Activated T-helper 2 cell treated with anti-CD3 and anti-CD28 coated beads, Interferon-gamma antibody, Interleukin-2, Interleukin-4, amounts not matched to agents 10 μg/mL and 5 μg/mL and 100 μg/mL, durations not matched to agents 14 hours and 24 hours and 36 hours (primary cell): ENCODE measurements at regions of chr21 and their contacts with region 1.

Region 1: DNA sequence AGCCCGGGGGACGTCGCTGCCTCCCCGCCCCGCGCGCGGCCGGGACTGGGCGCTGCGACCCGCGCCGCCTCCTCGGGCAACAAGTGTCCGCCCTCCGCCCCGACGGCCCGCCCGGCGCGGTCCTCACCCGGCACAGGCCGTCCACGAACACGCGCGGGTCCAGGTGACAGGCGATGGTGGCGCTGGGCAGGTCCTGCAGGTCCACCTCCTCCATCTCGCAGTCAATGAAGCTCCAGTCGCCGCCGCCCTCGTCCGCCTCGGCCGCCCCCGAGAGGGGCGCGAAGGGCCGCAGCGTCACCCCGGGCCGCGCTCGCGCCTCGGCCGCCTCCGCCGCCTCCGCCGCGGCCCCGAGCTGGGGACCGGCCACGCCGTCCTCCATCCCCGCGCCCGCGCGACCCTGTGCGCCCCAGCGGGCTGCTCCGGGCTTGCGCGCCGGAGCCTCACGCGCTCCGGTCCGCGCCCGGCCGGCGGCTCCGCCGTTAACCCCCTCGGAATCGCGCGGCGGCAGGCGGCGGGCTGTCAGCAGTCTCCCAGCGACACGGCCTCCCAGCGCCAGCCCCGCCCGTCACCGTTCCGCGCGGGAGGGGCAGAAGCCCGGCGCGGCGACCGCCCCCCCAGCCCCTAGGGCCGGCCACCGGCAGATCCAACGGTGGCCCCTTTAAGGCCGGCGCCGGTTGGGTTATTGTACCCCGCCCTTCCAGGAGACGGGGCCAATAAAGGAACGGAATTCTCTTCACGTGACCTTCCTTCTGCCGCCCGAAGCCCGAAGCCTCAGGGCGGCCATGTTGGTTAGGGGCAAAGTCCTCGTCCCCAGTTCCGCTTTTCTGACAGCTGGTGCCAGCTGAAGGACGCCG is at the start of gene RCAN1:
- DNase-seq: peak; percentile 85
- H3K4me3 Mint-ChIP-seq: peak within 1 kb of the TSS; percentile 85
- H3K27ac Mint-ChIP-seq: peak within 1 kb of the TSS; percentile 13
- H3K4me1 Mint-ChIP-seq: peaks cover 17% of the 10 kb centered on the region
- H3K27me3 Mint-ChIP-seq: peaks cover 19% of the 10 kb centered on the region
- total RNA-seq, gene RCAN1: 21.1 and 21.8 TPM in 2 replicates

Region 2: GRCh38 chr21:33915368-33916199 is 699.3 kb before region 1 on chr21 and contains the start of gene ATP5PO:
- intact Hi-C with region 1: loop called (anchors 2 kb)
- DNase-seq: peak; percentile 97
- H3K4me3 Mint-ChIP-seq: peak within 1 kb of the TSS; percentile 99
- H3K27ac Mint-ChIP-seq: peak within 1 kb of the TSS; percentile 98
- H3K4me1 Mint-ChIP-seq: peaks cover 30% of the 10 kb centered on the region
- H3K27me3 Mint-ChIP-seq: no peaks in the 10 kb centered on the region
- total RNA-seq, gene ATP5PO: 185 and 186 TPM in 2 replicates

Region 3: GRCh38 chr21:34688145-34688544 is 73.3 kb after region 1 on chr21:
- intact Hi-C with region 1: no loop called
- DNase-seq: peak; percentile 21
- H3K4me3 Mint-ChIP-seq: no peak overlapping the region
- H3K27ac Mint-ChIP-seq: no peak overlapping the region
- H3K4me1 Mint-ChIP-seq: peaks cover 2% of the 10 kb centered on the region
- H3K27me3 Mint-ChIP-seq: peaks cover 29% of the 10 kb centered on the region